ENCODE measurements at regions of chr4 and their contacts with region 1.

Region 1: GRCh38 chr4:69818060-69818639 is 41.8 kb downstream of the SULT1E1 start:
- DNase-seq: no peak
- ATAC-seq: no peak
- H3K4me3 ChIP-seq: no peak overlapping the region
- H3K4me3 Mint-ChIP-seq: no peak overlapping the region
- H3K27ac ChIP-seq: no peak overlapping the region
- H3K27ac Mint-ChIP-seq: peak overlapping the region in 1 of 9 donors; percentile 67
- H3K4me1 ChIP-seq: peaks cover 0 to 2% of the 10 kb centered on the region in 2 donors
- H3K4me1 Mint-ChIP-seq: peaks cover 0 to 10% (median 4%) of the 10 kb centered on the region in 7 donors
- H3K27me3 ChIP-seq: no peaks in the 10 kb centered on the region
- H3K27me3 Mint-ChIP-seq: no peaks in the 10 kb centered on the region

Region 2: GRCh38 chr4:69800599-69800998 is 17.6 kb before region 1 on chr4:
- CTCF ChIA-PET with region 1: interaction called, 4 read pairs
- POLR2A ChIA-PET with region 1: no interaction called
- intact Hi-C with region 1: loop called in 1 of 2 experiments (anchors 2 kb)
- DNase-seq: no peak
- ATAC-seq: no peak
- H3K4me3 ChIP-seq: no peak overlapping the region
- H3K4me3 Mint-ChIP-seq: no peak overlapping the region
- H3K27ac ChIP-seq: no peak overlapping the region
- H3K27ac Mint-ChIP-seq: no peak overlapping the region
- H3K4me1 ChIP-seq: no peaks in the 10 kb centered on the region
- H3K4me1 Mint-ChIP-seq: peaks cover 0 to 6% (median 0%) of the 10 kb centered on the region in 7 donors
- H3K27me3 ChIP-seq: no peaks in the 10 kb centered on the region
- H3K27me3 Mint-ChIP-seq: peaks cover 0 to 3% (median 0%) of the 10 kb centered on the region in 5 donors

Measured in naive thymus-derived CD4-positive, alpha-beta T cell (primary cell).